Left ventricle myocardium superior (tissue), 1 donor: ENCODE measurements at regions of chr7 and their contacts with region 1.

Region 1: DNA sequence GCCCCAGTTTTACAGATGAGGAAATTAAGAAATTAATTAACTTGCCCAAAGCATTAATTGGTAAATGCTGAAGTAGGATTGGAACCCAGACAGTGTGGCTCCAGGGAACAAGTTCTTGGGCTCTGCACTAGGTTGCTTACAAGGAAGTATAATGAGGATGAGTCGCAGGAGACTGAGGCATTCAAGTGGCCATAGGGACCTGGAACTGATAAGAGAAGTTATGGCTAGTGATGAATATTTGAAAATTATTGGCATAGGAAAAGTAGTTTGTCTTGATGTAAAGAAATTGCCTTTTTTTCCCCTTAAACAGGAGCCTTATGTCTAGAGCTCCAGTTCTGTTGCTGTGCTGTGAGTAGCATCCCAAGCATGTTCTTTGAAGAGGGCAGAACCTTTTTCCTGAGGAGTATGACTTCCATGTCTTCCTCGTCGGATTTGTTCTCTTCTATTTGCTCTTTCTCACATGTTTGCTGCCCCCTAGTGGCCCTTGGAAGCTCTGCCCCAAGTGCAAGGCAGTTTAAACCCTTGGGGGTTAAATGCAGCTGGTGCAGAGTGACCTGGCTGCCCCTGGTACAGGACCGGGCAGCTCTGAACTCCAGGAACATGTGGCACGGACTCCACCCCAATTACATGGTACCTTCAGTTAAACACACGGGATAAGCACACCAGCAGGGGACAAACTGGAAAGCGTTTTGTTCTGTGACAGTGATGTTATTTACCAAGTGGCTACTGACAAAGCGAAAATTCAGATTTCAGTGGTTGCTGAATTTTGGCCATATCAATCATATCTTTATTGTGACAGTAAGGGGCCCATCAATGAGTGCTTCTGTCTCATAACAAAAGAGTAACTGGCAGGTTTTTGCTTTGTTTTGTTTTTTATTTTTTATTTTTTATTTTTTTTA is 148.8 kb downstream of the HECW1 start:
- DNase-seq: peak; percentile 70
- ATAC-seq: peak; percentile 63

Region 2: GRCh38 chr7:42940985-42941847 is 320.0 kb before region 1 on chr7:
- intact Hi-C with region 1: loop called (anchors 5 kb)
- DNase-seq: peak; percentile 87
- ATAC-seq: peak; percentile 60